Activated T-helper 1 cell treated with anti-CD3 and anti-CD28 coated beads, Interleukin-12 subunit alpha, Interleukin-12 subunit beta, Interleukin-2, Interleukin-4 antibody, amounts not matched to agents 30 ng/mL and 10 ng/mL and 1 ng/mL, durations not matched to agents 14 hours and 24 hours and 36 hours (primary cell): ENCODE measurements at regions of chr5 and their contacts with region 1.

Region 1: GRCh38 chr5:68378204-68378824 is 162.8 kb downstream of the PIK3R1 start:
- DNase-seq: no peak
- H3K4me3 Mint-ChIP-seq: no peak overlapping the region
- H3K27ac Mint-ChIP-seq: peak overlapping the region; percentile 14
- H3K4me1 Mint-ChIP-seq: peaks cover 58% of the 10 kb centered on the region
- H3K27me3 Mint-ChIP-seq: no peaks in the 10 kb centered on the region

Region 2: GRCh38 chr5:68392617-68393016 is 14.3 kb after region 1 on chr5:
- intact Hi-C with region 1: loop called (anchors 1 kb)
- DNase-seq: no peak
- H3K4me3 Mint-ChIP-seq: no peak overlapping the region
- H3K27ac Mint-ChIP-seq: no peak overlapping the region
- H3K4me1 Mint-ChIP-seq: peaks cover 13% of the 10 kb centered on the region
- H3K27me3 Mint-ChIP-seq: peaks cover 7% of the 10 kb centered on the region

Region 3: GRCh38 chr5:68406767-68407241 is 28.5 kb after region 1 on chr5:
- intact Hi-C with region 1: loop called (anchors 1 kb)
- DNase-seq: no peak
- H3K4me3 Mint-ChIP-seq: peak overlapping the region; percentile 47
- H3K27ac Mint-ChIP-seq: peak overlapping the region; percentile 81
- H3K4me1 Mint-ChIP-seq: peaks cover 30% of the 10 kb centered on the region
- H3K27me3 Mint-ChIP-seq: peaks cover 2% of the 10 kb centered on the region